Caco-2 (cell line): ENCODE measurements at regions of chr2 and their contacts with region 1.

Region 1: DNA sequence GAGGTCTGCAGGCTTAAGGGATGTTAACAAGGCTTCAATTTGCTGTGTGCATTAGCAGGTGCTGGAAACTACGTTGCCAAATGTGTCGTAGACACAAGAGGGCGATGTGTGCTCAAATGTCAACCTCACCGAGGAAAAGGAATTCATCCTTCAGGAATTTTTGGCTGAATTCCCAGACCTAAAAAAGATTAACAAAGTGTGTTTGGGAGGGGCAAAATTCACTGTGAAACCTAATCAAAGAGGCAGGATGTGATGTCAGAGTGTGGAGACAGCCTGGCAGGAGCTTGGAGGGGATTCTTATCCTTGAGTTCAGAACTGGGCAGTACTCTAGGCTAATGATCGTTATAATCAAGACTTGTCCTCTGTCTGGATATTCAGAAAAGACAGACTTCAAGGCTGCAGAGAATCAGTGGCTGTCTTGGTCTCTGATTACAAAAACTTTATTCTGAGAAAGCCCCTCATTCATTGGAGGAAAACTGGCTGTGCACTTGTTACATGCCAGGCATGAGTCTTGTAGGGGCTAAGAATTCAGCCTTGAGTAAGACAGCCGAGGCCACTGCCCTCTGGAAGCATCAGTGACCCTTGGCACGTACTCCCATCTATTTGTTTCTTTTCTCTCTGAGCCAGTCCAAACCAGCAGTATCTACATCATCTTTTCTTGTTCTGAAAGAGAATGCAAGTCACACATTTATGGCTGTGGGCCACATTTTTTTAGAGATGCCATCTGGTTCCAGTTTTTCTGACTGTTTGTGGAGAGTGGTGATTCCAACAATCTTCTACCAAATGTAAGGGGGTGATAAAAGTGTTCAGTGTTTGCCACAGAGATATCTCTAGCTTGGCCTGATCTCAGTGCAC is 18.7 kb upstream of the SCYGR1 start:
- DNase-seq: peak; percentile 67
- H3K4me3 ChIP-seq: no peak overlapping the region
- H3K4me3 Mint-ChIP-seq: no peak overlapping the region
- H3K27ac Mint-ChIP-seq: peak overlapping the region; percentile 86
- H3K4me1 ChIP-seq: peaks cover 8% of the 10 kb centered on the region
- H3K4me1 Mint-ChIP-seq: peaks cover 22% of the 10 kb centered on the region
- H3K27me3 ChIP-seq: no peaks in the 10 kb centered on the region
- H3K27me3 Mint-ChIP-seq: no peaks in the 10 kb centered on the region
- CTCF ChIP-seq: peak; percentile 58 to 60

Region 2: GRCh38 chr2:227132986-227133385 is 273.4 kb before region 1 on chr2:
- CTCF ChIA-PET with region 1: no interaction called
- POLR2A ChIA-PET with region 1: no interaction called
- intact Hi-C with region 1: loop called (anchors 2 kb)
- DNase-seq: no peak
- H3K4me3 ChIP-seq: no peak overlapping the region
- H3K4me3 Mint-ChIP-seq: no peak overlapping the region
- H3K27ac Mint-ChIP-seq: no peak overlapping the region
- H3K4me1 ChIP-seq: no peaks in the 10 kb centered on the region; the same call in 1 of the 2 replicates
- H3K4me1 Mint-ChIP-seq: peaks cover 22% of the 10 kb centered on the region
- H3K27me3 ChIP-seq: no peaks in the 10 kb centered on the region
- H3K27me3 Mint-ChIP-seq: no peaks in the 10 kb centered on the region
- CTCF ChIP-seq: no peak

Region 3: DNA sequence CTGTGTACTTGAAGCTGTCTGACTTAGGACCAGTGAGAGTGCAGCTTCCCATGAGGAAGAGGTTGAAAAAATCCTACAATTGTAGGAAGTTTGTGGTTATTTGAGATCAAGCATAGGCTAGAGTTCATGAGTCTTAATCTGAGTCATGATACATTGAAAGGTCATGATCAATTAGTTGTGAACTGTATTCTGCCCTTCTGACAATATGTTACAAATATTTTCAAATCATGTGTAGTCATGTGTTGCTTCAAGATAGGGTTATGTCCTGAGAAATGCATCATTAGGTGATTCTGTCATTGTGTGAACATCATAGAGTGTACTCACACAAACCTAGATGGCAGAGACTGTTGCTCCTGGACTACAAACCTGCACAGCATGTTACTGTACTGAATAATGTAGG is 149.8 kb before region 1 on chr2:
- CTCF ChIA-PET with region 1: no interaction called
- POLR2A ChIA-PET with region 1: no interaction called
- intact Hi-C with region 1: no loop called
- DNase-seq: no peak
- H3K4me3 ChIP-seq: no peak overlapping the region
- H3K4me3 Mint-ChIP-seq: no peak overlapping the region
- H3K27ac Mint-ChIP-seq: no peak overlapping the region
- H3K4me1 ChIP-seq: no peaks in the 10 kb centered on the region
- H3K4me1 Mint-ChIP-seq: no peaks in the 10 kb centered on the region
- H3K27me3 ChIP-seq: no peaks in the 10 kb centered on the region
- H3K27me3 Mint-ChIP-seq: no peaks in the 10 kb centered on the region
- CTCF ChIP-seq: no peak

Region 4: GRCh38 chr2:227430639-227431038 is 24.2 kb after region 1 on chr2:
- CTCF ChIA-PET with region 1: no interaction called
- POLR2A ChIA-PET with region 1: no interaction called
- intact Hi-C with region 1: no loop called
- DNase-seq: no peak
- H3K4me3 ChIP-seq: no peak overlapping the region
- H3K4me3 Mint-ChIP-seq: no peak overlapping the region
- H3K27ac Mint-ChIP-seq: no peak overlapping the region
- H3K4me1 ChIP-seq: no peaks in the 10 kb centered on the region
- H3K4me1 Mint-ChIP-seq: no peaks in the 10 kb centered on the region
- H3K27me3 ChIP-seq: no peaks in the 10 kb centered on the region
- H3K27me3 Mint-ChIP-seq: no peaks in the 10 kb centered on the region
- CTCF ChIP-seq: no peak

Region 5: DNA sequence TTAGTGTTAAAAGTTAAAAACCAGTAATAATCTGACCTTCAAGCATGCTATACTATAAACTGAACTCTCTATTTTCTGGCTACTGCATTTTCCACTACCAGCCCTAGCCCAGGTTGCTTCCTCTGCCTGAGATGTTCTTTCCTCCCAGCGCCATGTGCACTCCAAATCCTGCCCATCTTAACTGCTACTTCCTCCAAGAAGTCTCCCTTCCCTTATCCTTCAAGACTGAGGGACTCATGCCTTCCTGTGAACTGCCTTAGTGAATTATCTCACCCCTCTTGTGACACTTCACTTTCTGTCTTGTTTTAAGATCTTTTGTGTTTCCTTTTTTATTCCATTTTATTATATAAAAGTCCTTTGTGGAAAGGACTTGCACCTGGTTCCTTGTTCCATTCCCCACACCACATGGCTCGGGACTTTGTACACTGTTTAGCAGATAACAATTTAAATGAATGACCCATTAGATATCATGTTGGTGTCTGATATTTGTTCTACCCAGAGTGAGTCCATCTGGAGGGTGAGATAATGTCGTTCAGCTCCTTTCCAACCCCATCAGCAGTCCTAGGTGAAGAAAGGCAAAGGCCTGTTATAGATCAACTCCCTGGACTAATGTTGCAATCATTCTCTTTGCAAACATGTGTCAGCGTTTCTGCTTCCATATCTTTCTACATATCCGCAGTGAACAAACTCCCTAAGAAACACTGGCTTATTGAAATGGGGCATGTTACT is 44.7 kb after region 1 on chr2:
- CTCF ChIA-PET with region 1: interaction called, 3 read pairs
- POLR2A ChIA-PET with region 1: no interaction called
- intact Hi-C with region 1: loop called (anchors 5 kb)
- DNase-seq: peak; percentile 44 to 58
- H3K4me3 ChIP-seq: no peak overlapping the region
- H3K4me3 Mint-ChIP-seq: peak overlapping the region; percentile 12
- H3K27ac Mint-ChIP-seq: peak overlapping the region; percentile 84
- H3K4me1 ChIP-seq: peaks cover 48% of the 10 kb centered on the region
- H3K4me1 Mint-ChIP-seq: peaks cover 27% of the 10 kb centered on the region
- H3K27me3 ChIP-seq: no peaks in the 10 kb centered on the region
- H3K27me3 Mint-ChIP-seq: no peaks in the 10 kb centered on the region
- CTCF ChIP-seq: no peak

Region 6: DNA sequence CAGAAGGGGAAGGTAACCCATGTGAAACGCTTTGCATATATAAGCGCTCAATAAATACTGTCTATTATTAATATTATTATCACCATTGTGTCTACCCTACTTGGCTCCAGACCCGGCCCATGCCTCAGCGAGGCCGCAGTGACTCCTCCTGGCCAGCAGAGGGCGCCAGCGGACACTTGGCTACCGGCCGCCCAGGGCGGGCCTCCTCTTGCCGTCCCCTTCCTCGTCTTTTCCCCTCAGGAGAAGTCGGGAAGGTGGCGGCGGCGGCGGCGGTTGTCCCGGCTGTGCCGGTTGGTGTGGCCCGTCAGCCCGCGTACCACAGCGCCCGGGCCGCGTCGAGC is 65.5 kb after region 1 on chr2 and contains the start of gene AGFG1:
- CTCF ChIA-PET with region 1: interaction called, 3 read pairs
- POLR2A ChIA-PET with region 1: no interaction called
- intact Hi-C with region 1: loop called (anchors 1 kb)
- DNase-seq: peak; percentile 80 to 89
- H3K4me3 ChIP-seq: peak within 1 kb of the TSS; percentile 79
- H3K4me3 Mint-ChIP-seq: peak within 1 kb of the TSS; percentile 93
- H3K27ac Mint-ChIP-seq: peak within 1 kb of the TSS; percentile 22
- H3K4me1 ChIP-seq: peaks cover 29% of the 10 kb centered on the region
- H3K4me1 Mint-ChIP-seq: peaks cover 12% of the 10 kb centered on the region
- H3K27me3 ChIP-seq: no peaks in the 10 kb centered on the region
- H3K27me3 Mint-ChIP-seq: no peaks in the 10 kb centered on the region
- CTCF ChIP-seq: peak; percentile 88 to 89
- total RNA-seq, gene AGFG1: 73.1 and 73.2 TPM in 2 replicates

Region 7: GRCh38 chr2:227578651-227579050 is 172.2 kb after region 1 on chr2:
- CTCF ChIA-PET with region 1: no interaction called
- POLR2A ChIA-PET with region 1: no interaction called
- intact Hi-C with region 1: loop called (anchors 5 kb)
- DNase-seq: no peak
- H3K4me3 ChIP-seq: no peak overlapping the region
- H3K4me3 Mint-ChIP-seq: no peak overlapping the region
- H3K27ac Mint-ChIP-seq: no peak overlapping the region
- H3K4me1 ChIP-seq: peaks cover 12% of the 10 kb centered on the region; the same call in 1 of the 2 replicates
- H3K4me1 Mint-ChIP-seq: peaks cover 20% of the 10 kb centered on the region
- H3K27me3 ChIP-seq: no peaks in the 10 kb centered on the region
- H3K27me3 Mint-ChIP-seq: no peaks in the 10 kb centered on the region
- CTCF ChIP-seq: no peak

Region 8: DNA sequence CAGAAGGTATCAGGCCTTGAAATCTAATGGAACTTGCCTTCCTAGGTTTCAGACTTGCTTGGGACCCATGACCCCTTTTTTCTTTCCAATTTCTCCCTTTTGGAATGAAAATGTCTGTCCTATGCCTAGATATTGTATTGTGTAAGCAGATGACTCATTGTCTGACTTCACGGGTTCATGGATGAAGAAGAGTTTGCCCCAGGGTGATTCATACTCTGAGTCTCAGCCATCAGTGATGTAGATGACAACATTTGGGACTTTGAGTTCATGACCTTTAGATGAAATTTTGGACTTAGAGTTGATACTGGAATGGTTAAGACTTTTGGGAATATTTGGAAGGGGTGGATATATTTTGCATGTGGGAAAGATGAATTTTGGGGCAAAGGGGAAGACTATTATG is 249.1 kb after region 1 on chr2:
- CTCF ChIA-PET with region 1: no interaction called
- POLR2A ChIA-PET with region 1: no interaction called
- intact Hi-C with region 1: loop called (anchors 5 kb)
- DNase-seq: no peak
- H3K4me3 ChIP-seq: no peak overlapping the region
- H3K4me3 Mint-ChIP-seq: no peak overlapping the region
- H3K27ac Mint-ChIP-seq: peak overlapping the region; percentile 37
- H3K4me1 ChIP-seq: peaks cover 11% of the 10 kb centered on the region
- H3K4me1 Mint-ChIP-seq: peaks cover 12% of the 10 kb centered on the region
- H3K27me3 ChIP-seq: no peaks in the 10 kb centered on the region
- H3K27me3 Mint-ChIP-seq: no peaks in the 10 kb centered on the region
- CTCF ChIP-seq: no peak